ENCODE measurements at regions of chr18 and their contacts with region 1.

Region 1: DNA sequence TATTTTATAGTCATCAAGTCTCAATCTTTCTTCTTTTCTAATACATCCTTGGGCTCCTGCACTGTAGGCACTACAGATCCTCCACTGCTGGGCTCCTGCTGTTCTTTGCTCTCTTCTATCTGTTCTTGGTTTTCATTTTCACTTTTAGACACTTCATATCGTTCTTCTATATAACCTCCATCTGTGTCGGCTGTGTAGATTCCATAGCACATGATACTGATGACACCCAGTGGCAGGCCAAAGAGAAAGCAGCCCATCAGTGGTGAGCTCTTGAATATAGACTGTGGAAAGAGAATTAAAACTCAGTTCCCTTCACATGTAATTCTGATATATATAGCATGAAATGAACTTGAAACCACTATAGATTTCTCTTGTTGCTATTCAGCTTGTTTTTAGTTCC is 38.0 kb downstream of the TMX3 start:
- DNase-seq: no peak
- ATAC-seq: no peak
- H3K4me3 ChIP-seq: no peak overlapping the region
- H3K27ac ChIP-seq: no peak overlapping the region
- H3K4me1 ChIP-seq: no peaks in the 10 kb centered on the region
- H3K27me3 ChIP-seq: no peaks in the 10 kb centered on the region
- CTCF ChIP-seq: no peak
- EP300 ChIP-seq: no peak
- POLR2A ChIP-seq: no peak
- RAD21 ChIP-seq: no peak

Region 2: DNA sequence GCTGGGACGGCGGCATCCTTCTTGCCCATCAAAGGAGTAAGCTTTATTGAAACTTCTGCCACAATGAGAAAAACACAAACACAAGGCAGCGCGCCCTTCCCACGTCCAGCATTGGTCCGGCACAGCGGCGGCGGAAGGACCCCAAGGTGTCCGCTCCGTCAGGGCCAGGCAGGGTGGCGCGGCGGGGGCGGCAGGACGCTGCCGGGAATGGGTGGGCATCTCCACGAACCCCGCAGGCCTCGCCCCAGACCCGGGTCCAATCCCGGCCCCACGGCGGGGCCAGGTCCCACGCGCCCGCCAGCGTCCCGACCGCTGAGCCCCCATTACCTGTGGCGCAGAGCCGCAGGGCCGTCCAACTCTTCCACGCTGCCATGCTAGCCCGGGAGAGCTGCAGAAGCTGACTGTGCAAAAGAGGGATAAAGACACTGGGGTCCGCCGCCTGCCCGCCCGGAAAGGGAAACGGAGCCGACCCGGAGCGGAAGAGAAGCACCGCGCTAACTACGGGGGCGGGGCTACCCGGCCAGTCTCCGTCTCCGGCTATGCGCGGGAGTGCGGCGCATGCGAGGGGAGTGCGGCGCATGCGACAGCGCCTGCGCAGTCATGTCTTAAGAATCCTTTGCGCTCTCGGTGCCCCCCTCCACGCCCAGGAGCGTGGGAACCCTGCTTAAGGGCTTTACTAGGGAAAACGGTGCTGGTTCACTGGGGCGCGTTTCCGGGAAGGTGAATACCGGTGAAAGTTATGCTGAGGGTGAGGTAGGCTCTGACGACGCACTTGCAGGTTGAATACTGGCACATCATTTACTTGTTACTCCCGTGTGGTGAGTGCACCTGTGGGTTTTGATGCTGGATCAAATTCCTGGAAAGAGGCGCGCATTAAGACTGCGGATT is 37.9 kb after region 1 on chr18 and contains the start of gene TMX3:
- CTCF ChIA-PET with region 1: no interaction called
- POLR2A ChIA-PET with region 1: no interaction called
- in situ Hi-C with region 1: loop called (anchors 5 kb)
- intact Hi-C with region 1: no loop called
- DNase-seq: peak; percentile 89
- ATAC-seq: peak; percentile 99
- H3K4me3 ChIP-seq: peak within 1 kb of the TSS; percentile 84 to 96 (median 94)
- H3K27ac ChIP-seq: peak within 1 kb of the TSS; percentile 80
- H3K4me1 ChIP-seq: peaks cover 26% of the 10 kb centered on the region
- H3K27me3 ChIP-seq: no peaks in the 10 kb centered on the region; a peak in 1 of 5 replicates
- CTCF ChIP-seq: peak; percentile 6; the same call in 1 of the 2 replicates
- EP300 ChIP-seq: no peak
- POLR2A ChIP-seq: peak; percentile 43 to 59; a peak in 3 of 4 replicates
- RAD21 ChIP-seq: 0 out of 2 replicates have a peak, but pooled peaks have one; percentile 9
- total RNA-seq, gene TMX3: 11.6 and 25.0 TPM in 2 replicates

Measured in HepG2 (cell line).